Left lung (tissue), 14 donors: ENCODE measurements at regions of chr11 and their contacts with region 1.

Region 1: DNA sequence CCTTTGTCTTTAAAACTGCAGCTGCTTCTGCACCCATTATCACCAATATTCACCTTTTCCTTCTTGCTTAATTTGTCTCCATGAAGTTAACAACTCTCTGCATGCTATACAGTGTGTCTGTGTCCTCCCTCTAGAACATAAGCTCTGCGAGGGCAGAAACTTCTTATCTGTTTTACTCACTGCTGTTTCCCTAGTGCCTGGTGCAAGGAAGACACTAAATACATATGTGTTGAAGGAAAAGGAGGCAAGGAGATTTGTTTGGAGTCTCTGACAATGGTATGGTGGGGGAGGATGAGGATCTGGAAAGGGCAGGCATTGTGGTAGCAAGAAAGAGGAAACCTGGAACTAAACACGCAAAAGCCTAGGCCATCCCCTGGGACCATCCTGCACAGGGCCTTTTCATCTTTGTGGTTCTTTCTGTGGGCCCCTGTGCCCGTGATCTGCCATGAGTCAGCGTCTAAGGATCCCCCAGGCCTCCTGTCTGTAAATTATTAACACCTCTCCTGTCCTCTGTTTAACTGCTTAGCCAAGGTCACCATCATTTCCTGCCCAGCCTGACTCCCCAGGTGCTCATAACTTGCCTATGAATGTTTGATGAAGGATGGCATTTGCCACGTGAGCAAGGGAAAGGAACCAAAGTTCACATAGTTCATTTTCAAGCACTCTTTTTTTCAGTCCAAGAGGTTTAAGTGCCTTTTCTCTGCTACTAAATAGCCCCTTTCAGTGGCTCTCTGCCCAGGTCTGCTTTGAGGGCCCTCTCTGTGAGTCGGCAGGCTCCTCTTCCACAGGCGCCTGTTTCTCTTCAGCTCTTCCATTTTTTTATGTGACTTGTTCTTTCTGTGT is 131.1 kb downstream of the RASSF10 start:
- DNase-seq: peak; percentile 33 to 85 (median 70)
- ATAC-seq: peak; percentile 92
- H3K4me3 ChIP-seq: no peak overlapping the region
- H3K27ac ChIP-seq: peak overlapping the region in 1 of 2 donors; percentile 51
- H3K4me1 ChIP-seq: peaks cover 0 to 7% of the 10 kb centered on the region in 2 donors
- H3K27me3 ChIP-seq: no peaks in the 10 kb centered on the region
- CTCF ChIP-seq: no peak

Region 2: GRCh38 chr11:12979928-12980689 is 160.1 kb before region 1 on chr11:
- intact Hi-C with region 1: loop called in 1 of 2 experiments (anchors 10 kb)
- DNase-seq: no peak
- ATAC-seq: no peak
- H3K4me3 ChIP-seq: no peak overlapping the region
- H3K27ac ChIP-seq: no peak overlapping the region
- H3K4me1 ChIP-seq: no peaks in the 10 kb centered on the region
- H3K27me3 ChIP-seq: no peaks in the 10 kb centered on the region
- CTCF ChIP-seq: no peak

Region 3: GRCh38 chr11:13040969-13041561 is 99.2 kb before region 1 on chr11:
- intact Hi-C with region 1: no loop called
- DNase-seq: peak in 1 of 4 donors; percentile 21
- ATAC-seq: peak; percentile 66
- H3K4me3 ChIP-seq: no peak overlapping the region
- H3K27ac ChIP-seq: no peak overlapping the region
- H3K4me1 ChIP-seq: no peaks in the 10 kb centered on the region
- H3K27me3 ChIP-seq: no peaks in the 10 kb centered on the region
- CTCF ChIP-seq: no peak

Region 4: DNA sequence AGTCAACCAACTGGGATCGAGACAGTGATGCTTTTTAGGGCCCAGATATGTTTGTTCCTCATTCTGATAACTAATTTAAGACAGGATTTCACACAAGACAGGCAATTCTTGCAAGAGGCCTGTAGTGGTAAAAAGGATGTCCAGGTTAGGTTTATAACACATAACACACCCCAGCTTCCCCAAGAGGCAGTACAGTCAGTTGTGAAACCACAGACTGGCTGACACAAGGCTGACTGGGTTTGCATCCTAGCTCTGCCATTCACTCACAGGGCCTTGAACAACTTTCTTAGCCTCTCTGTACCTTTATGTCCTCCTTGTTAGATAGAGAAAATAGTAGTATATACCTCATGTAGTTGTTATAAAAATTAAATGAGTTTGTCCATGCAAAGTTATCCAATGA is 410.5 kb after region 1 on chr11:
- intact Hi-C with region 1: no loop called
- DNase-seq: no peak
- ATAC-seq: no peak
- H3K4me3 ChIP-seq: no peak overlapping the region
- H3K27ac ChIP-seq: no peak overlapping the region
- H3K4me1 ChIP-seq: no peaks in the 10 kb centered on the region
- H3K27me3 ChIP-seq: no peaks in the 10 kb centered on the region
- CTCF ChIP-seq: no peak